Posterior vena cava (tissue), 2 donors: ENCODE measurements at regions of chr3 and their contacts with region 1.

Region 1: GRCh38 chr3:134260984-134261383 is 10.3 kb upstream of the RYK start:
- DNase-seq: no peak

Region 2: GRCh38 chr3:132499071-132499470 is 1761.9 kb before region 1 on chr3:
- intact Hi-C with region 1: loop called in 1 of 2 experiments (anchors 10 kb)
- DNase-seq: no peak

Region 3: GRCh38 chr3:134228035-134228434 is 32.9 kb before region 1 on chr3:
- intact Hi-C with region 1: no loop called
- DNase-seq: no peak

Region 4: DNA sequence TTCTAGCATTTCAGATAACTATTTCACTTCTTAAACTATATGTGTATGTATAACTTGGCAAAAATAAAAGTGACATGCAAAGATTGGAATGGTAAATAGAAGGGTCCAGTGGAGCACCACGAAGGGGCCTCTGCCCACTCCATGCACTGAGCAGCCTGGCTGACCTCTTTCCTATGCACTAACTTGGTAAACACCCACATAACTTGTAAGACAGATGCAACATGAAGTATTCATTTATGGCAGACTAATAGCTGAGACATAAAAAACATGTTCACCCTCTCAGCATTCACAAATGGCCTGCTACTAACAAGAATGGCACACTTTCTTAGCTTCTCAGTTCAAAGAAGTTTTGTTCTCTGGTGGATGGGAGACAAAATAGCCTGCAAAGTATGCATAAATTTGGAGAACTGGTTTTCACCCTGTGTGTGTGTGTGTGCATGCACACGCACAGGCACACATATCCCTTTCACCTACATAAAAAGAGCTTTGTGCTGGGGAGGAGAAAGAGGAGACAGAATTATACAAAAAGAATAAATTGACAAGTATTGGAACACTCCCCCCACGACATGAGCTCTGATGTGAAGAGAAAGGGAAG is 16.2 kb after region 1 on chr3:
- intact Hi-C with region 1: no loop called
- DNase-seq: no peak